Motor neuron (in vitro differentiated cells): ENCODE measurements at regions of chr17 and their contacts with region 1.

Region 1: DNA sequence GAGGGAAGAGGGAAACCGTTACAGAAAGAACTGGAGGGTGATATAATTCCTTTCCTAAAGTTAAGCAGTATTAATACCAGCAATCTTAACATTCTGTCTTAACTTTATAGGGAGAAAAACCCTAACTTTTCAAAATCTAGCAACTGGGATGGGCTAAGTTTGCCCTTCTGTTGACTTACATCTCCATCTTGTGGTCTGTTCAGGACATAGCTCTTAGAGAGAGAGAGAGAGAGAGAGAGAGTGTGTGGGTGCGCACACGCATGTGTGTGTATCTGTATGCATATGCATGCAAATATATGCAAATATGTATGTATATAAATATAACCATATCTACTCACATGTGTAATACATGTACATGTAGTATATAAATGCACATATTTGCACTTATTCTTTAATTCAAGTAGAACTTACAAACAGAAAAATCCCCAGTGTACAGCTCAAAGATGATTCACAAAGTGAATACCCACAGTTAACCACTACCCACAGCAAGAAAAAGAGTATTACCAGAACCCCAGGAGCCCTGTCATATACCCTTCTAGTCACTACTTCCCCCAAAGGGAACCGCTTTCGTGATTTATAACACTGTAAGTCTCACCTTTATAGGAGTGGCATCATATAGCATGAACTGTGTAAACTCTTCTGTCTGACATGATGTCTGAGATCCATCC is 46.5 kb downstream of the STX8 start:
- ATAC-seq: peak in 7 of 8 experiments; percentile 27 to 93 (median 69)
- H3K4me3 ChIP-seq: no peak overlapping the region
- H3K27ac ChIP-seq: no peak overlapping the region
- H3K4me1 ChIP-seq: peaks cover 11 to 14% of the 10 kb centered on the region in 2 donors

Region 2: GRCh38 chr17:8991514-8992285 is 537.5 kb before region 1 on chr17:
- in situ Hi-C with region 1: loop called in 6 of 9 experiments (anchors 25 kb)
- ATAC-seq: peak in 7 of 8 experiments; percentile 39 to 96 (median 69)
- H3K4me3 ChIP-seq: no peak overlapping the region
- H3K27ac ChIP-seq: no peak overlapping the region
- H3K4me1 ChIP-seq: no peaks in the 10 kb centered on the region

Region 3: GRCh38 chr17:9021158-9021991 is 507.8 kb before region 1 on chr17 and contains the start of gene NTN1:
- in situ Hi-C with region 1: loop called in 2 of 9 experiments (anchors 25 kb)
- ATAC-seq: peak; percentile 62 to 82 (median 77)
- H3K4me3 ChIP-seq: peak within 1 kb of the TSS; percentile 48 to 84 (median 49)
- H3K27ac ChIP-seq: peak within 1 kb of the TSS in 1 of 2 donors; percentile 6
- H3K4me1 ChIP-seq: peaks cover 11 to 20% of the 10 kb centered on the region in 2 donors
- total RNA-seq, gene NTN1: 8.0 to 491 (median 16.4) TPM

Region 4: GRCh38 chr17:9256751-9257629 is 272.2 kb before region 1 on chr17:
- in situ Hi-C with region 1: loop called in 1 of 9 experiments (anchors 25 kb)
- ATAC-seq: peak in 3 of 8 experiments; percentile 25 to 40 (median 33)
- H3K4me3 ChIP-seq: no peak overlapping the region
- H3K27ac ChIP-seq: no peak overlapping the region
- H3K4me1 ChIP-seq: peaks cover 22 to 44% of the 10 kb centered on the region in 2 donors

Region 5: DNA sequence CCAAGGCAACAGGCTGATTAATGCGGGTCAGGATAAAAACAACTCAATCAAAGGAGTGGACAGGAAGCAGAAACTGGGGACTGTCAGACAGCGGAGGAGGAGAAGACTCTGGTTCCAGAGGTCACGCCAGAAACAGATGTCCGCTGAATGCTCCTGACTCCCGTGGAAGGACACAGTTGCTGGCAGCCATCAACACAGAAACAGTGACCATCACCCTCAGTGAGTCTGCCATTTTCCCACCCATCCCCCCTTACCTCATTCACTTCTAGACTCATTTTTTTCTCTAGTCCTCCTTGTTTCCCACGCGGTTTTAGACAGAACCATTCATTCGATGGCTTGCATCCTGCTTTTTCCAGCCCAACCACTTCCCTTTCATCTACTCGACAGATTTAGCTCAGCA is 221.4 kb after region 1 on chr17:
- in situ Hi-C with region 1: no loop called
- ATAC-seq: peak in 1 of 8 experiments; percentile 8
- H3K4me3 ChIP-seq: no peak overlapping the region
- H3K27ac ChIP-seq: no peak overlapping the region
- H3K4me1 ChIP-seq: peaks cover 0 to 12% of the 10 kb centered on the region in 2 donors